ENCODE measurements at regions of chr5 and their contacts with region 1.

Region 1: DNA sequence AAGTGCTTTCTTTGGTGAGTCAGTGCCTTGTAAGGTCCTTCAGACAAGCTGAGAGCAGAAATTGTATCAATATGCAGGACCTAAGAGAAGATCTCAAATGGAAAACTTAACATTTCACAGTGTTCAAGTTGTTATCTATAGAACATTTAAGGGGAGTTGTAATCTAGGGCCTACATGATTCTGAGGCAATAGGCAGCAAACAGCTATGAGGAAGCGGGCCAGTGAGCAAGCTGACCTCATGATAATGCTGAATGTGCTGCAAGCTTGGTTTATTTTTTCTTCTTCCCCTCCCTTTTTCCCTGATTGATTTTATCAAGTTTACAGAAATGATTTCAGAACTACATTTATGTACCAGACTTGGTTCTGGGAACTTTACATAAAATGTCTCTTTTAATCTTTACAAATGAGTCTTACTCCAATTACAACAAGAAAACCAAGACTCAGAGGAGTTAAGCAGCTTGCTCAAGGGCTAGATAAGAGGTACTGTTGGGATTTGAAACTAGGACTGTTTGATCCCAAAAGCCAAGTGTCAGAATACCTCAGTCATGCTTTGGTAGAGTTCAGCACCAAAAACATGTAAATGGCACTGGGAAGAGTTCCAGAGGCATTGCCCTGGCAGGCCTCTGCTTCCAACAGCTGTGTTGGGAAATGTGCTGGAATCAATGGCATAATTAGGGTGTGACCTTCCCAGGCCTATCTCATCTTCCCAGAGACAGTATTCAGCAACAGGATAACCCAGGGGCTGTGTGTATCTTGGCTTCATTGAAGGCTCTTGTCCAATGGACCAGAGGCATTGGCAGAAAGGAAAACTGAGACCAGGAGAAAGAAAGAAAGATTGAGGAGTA is 130.1 kb downstream of the LRRC70 start:
- DNase-seq: no peak
- ATAC-seq: no peak
- H3K4me3 ChIP-seq: no peak overlapping the region
- H3K4me3 Mint-ChIP-seq: no peak overlapping the region
- H3K27ac ChIP-seq: no peak overlapping the region
- H3K27ac Mint-ChIP-seq: no peak overlapping the region
- H3K4me1 ChIP-seq: no peaks in the 10 kb centered on the region
- H3K4me1 Mint-ChIP-seq: no peaks in the 10 kb centered on the region
- H3K27me3 ChIP-seq: no peaks in the 10 kb centered on the region
- H3K27me3 Mint-ChIP-seq: peaks cover 2% of the 10 kb centered on the region
- CTCF ChIP-seq: no peak

Region 2: DNA sequence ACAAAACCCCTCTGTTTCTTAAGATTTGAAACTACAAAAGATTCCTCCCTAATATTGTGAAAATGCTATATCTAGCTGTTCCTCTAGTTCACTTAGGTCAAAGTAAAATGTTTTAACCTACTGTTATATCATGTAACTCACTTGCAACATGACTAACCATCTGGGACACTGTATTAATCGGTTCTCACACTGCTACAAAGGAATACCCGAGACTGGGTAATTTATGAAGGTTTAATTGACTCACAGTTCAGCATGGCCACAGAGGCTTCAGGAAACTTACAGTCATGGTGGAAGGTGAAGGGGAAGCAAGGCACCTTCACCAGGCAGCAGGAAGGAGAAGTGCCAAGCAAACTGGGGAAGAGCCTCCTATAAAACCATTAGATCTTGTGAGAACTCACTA is 339.7 kb before region 1 on chr5:
- CTCF ChIA-PET with region 1: no interaction called
- POLR2A ChIA-PET with region 1: no interaction called
- intact Hi-C with region 1: loop called in 1 of 2 experiments (anchors 10 kb)
- DNase-seq: no peak
- ATAC-seq: no peak
- H3K4me3 ChIP-seq: no peak overlapping the region
- H3K4me3 Mint-ChIP-seq: no peak overlapping the region
- H3K27ac ChIP-seq: no peak overlapping the region
- H3K27ac Mint-ChIP-seq: peak overlapping the region; percentile 58
- H3K4me1 ChIP-seq: no peaks in the 10 kb centered on the region
- H3K4me1 Mint-ChIP-seq: peaks cover 5% of the 10 kb centered on the region
- H3K27me3 ChIP-seq: no peaks in the 10 kb centered on the region
- H3K27me3 Mint-ChIP-seq: no peaks in the 10 kb centered on the region
- CTCF ChIP-seq: no peak

Region 3: GRCh38 chr5:62692946-62693713 is 15.6 kb before region 1 on chr5:
- CTCF ChIA-PET with region 1: no interaction called
- POLR2A ChIA-PET with region 1: no interaction called
- intact Hi-C with region 1: no loop called
- DNase-seq: no peak
- ATAC-seq: no peak
- H3K4me3 ChIP-seq: no peak overlapping the region
- H3K4me3 Mint-ChIP-seq: no peak overlapping the region
- H3K27ac ChIP-seq: no peak overlapping the region
- H3K27ac Mint-ChIP-seq: no peak overlapping the region
- H3K4me1 ChIP-seq: no peaks in the 10 kb centered on the region
- H3K4me1 Mint-ChIP-seq: peaks cover 3% of the 10 kb centered on the region
- H3K27me3 ChIP-seq: no peaks in the 10 kb centered on the region
- H3K27me3 Mint-ChIP-seq: no peaks in the 10 kb centered on the region
- CTCF ChIP-seq: no peak

Region 4: GRCh38 chr5:62762503-62762902 is 53.8 kb after region 1 on chr5:
- CTCF ChIA-PET with region 1: no interaction called
- POLR2A ChIA-PET with region 1: no interaction called
- intact Hi-C with region 1: no loop called
- DNase-seq: no peak
- ATAC-seq: no peak
- H3K4me3 ChIP-seq: no peak overlapping the region
- H3K4me3 Mint-ChIP-seq: no peak overlapping the region
- H3K27ac ChIP-seq: no peak overlapping the region
- H3K27ac Mint-ChIP-seq: no peak overlapping the region
- H3K4me1 ChIP-seq: no peaks in the 10 kb centered on the region
- H3K4me1 Mint-ChIP-seq: no peaks in the 10 kb centered on the region
- H3K27me3 ChIP-seq: no peaks in the 10 kb centered on the region
- H3K27me3 Mint-ChIP-seq: no peaks in the 10 kb centered on the region
- CTCF ChIP-seq: no peak